Natural killer cell (primary cell): ENCODE measurements at regions of chr14 and their contacts with region 1.

Region 1: GRCh38 chr14:101823511-101824120 is 62.1 kb downstream of the PPP2R5C start:
- DNase-seq: peak; percentile 63 to 88
- ATAC-seq: peak; percentile 47 to 70 (median 57)
- H3K4me3 ChIP-seq: peak overlapping the region; percentile 48
- H3K4me3 Mint-ChIP-seq: peak overlapping the region; percentile 81
- H3K27ac ChIP-seq: peak overlapping the region; percentile 98
- H3K27ac Mint-ChIP-seq: peak overlapping the region; percentile 97 to 99
- H3K4me1 ChIP-seq: peaks cover 75% of the 10 kb centered on the region
- H3K4me1 Mint-ChIP-seq: peaks cover 86 to 88% of the 10 kb centered on the region in 2 donors
- H3K27me3 ChIP-seq: no peaks in the 10 kb centered on the region
- H3K27me3 Mint-ChIP-seq: no peaks in the 10 kb centered on the region
- CTCF ChIP-seq: no peak

Region 2: GRCh38 chr14:101713621-101714349 is 109.8 kb before region 1 on chr14:
- intact Hi-C with region 1: loop called (anchors 1 kb)
- DNase-seq: peak; percentile 52 to 85
- ATAC-seq: peak; percentile 68 to 82 (median 76)
- H3K4me3 ChIP-seq: no peak overlapping the region
- H3K4me3 Mint-ChIP-seq: peak overlapping the region; percentile 65
- H3K27ac ChIP-seq: peak overlapping the region; percentile 95
- H3K27ac Mint-ChIP-seq: peak overlapping the region; percentile 96 to 100
- H3K4me1 ChIP-seq: peaks cover 75% of the 10 kb centered on the region
- H3K4me1 Mint-ChIP-seq: peaks cover 59 to 73% of the 10 kb centered on the region in 2 donors
- H3K27me3 ChIP-seq: no peaks in the 10 kb centered on the region
- H3K27me3 Mint-ChIP-seq: no peaks in the 10 kb centered on the region
- CTCF ChIP-seq: no peak

Region 3: DNA sequence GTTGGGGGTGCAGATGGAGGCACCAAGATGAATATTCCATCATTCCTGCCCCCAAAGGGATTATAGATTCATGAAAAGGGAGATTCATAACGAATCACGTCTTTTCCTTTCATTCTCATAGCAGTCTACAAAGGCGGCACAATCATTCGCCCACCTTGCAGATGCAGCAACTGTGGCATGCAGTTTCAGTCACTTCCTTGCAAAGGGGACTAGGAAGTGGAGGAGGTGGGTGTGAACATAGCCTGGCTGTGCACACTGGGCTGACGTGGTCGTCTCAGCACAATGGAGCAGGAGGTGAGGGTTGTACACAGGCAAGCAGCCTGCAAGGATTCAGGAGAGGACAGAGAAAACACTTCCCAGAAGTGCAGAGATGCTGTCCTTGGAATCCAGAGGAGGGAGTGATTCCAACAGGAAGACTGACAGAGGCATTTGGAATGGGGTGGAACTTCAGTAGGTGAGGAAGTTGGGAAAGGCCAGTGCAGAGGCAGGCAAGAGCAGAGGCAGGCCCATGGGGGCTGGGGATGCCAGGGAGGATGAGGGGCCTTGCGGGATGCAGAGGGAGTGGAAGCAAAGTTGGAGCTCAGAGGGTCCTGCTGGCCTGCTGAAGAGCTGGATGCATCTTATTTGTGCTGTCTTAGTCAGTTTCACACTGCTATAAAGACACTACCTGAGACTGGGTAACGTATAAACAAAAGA is 84.0 kb before region 1 on chr14:
- intact Hi-C with region 1: no loop called
- DNase-seq: peak in 1 of 2 donors; percentile 12
- ATAC-seq: peak in 2 of 3 donors; percentile 46 to 53
- H3K4me3 ChIP-seq: no peak overlapping the region
- H3K4me3 Mint-ChIP-seq: peak overlapping the region; percentile 49
- H3K27ac ChIP-seq: no peak overlapping the region
- H3K27ac Mint-ChIP-seq: peak overlapping the region in 1 of 2 donors; percentile 70
- H3K4me1 ChIP-seq: peaks cover 20% of the 10 kb centered on the region
- H3K4me1 Mint-ChIP-seq: peaks cover 28 to 34% of the 10 kb centered on the region in 2 donors
- H3K27me3 ChIP-seq: no peaks in the 10 kb centered on the region
- H3K27me3 Mint-ChIP-seq: peaks cover 0 to 2% of the 10 kb centered on the region in 2 donors
- CTCF ChIP-seq: no peak

Region 4: GRCh38 chr14:101761032-101761880 is 62.4 kb before region 1 on chr14 and contains the start of gene PPP2R5C:
- intact Hi-C with region 1: loop called (anchors 2 kb)
- DNase-seq: peak; percentile 81 to 93
- ATAC-seq: peak; percentile 63 to 82 (median 71)
- H3K4me3 ChIP-seq: peak within 1 kb of the TSS; percentile 97
- H3K4me3 Mint-ChIP-seq: peak within 1 kb of the TSS; percentile 94
- H3K27ac ChIP-seq: peak within 1 kb of the TSS; percentile 96
- H3K27ac Mint-ChIP-seq: peak within 1 kb of the TSS; percentile 84 to 85
- H3K4me1 ChIP-seq: peaks cover 33% of the 10 kb centered on the region
- H3K4me1 Mint-ChIP-seq: peaks cover 57 to 65% of the 10 kb centered on the region in 2 donors
- H3K27me3 ChIP-seq: no peaks in the 10 kb centered on the region
- H3K27me3 Mint-ChIP-seq: peaks cover 0 to 3% of the 10 kb centered on the region in 2 donors
- CTCF ChIP-seq: no peak
- total RNA-seq, gene PPP2R5C: 716 to 779 (median 736) TPM

Region 5: DNA sequence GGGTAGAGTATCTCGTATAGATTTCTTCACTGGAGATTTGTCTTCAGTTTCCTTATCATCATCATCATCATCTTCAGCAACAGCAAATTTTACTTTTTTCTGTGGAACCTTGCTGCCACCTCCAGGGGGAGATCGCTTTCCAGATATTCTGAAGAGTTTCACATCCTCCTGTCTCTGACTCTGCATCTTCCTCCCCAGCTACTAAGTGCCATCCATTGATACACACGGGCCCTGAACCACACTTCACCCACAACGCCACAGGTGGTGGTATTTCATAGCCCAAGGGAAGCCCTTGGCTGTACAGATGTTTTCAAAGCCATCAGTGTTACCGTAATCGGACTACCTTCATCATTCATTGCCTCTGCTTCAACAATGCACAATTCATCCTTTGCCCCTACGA is 20.0 kb after region 1 on chr14:
- intact Hi-C with region 1: loop called (anchors 2 kb)
- DNase-seq: peak; percentile 40 to 86
- ATAC-seq: peak; percentile 70 to 78 (median 76)
- H3K4me3 ChIP-seq: no peak overlapping the region
- H3K4me3 Mint-ChIP-seq: peak overlapping the region; percentile 68
- H3K27ac ChIP-seq: peak overlapping the region; percentile 54
- H3K27ac Mint-ChIP-seq: peak overlapping the region; percentile 70 to 97
- H3K4me1 ChIP-seq: peaks cover 65% of the 10 kb centered on the region
- H3K4me1 Mint-ChIP-seq: peaks cover 84 to 85% of the 10 kb centered on the region in 2 donors
- H3K27me3 ChIP-seq: no peaks in the 10 kb centered on the region
- H3K27me3 Mint-ChIP-seq: no peaks in the 10 kb centered on the region
- CTCF ChIP-seq: peak; percentile 59

Region 6: GRCh38 chr14:102086972-102087761 is 263.6 kb after region 1 on chr14 and contains the start of gene HSP90AA1:
- intact Hi-C with region 1: loop called (anchors 10 kb)
- DNase-seq: peak; percentile 96 to 97
- ATAC-seq: peak; percentile 69 to 88 (median 78)
- H3K4me3 ChIP-seq: peak within 1 kb of the TSS; percentile 62
- H3K4me3 Mint-ChIP-seq: peak within 1 kb of the TSS; percentile 95
- H3K27ac ChIP-seq: peak within 1 kb of the TSS; percentile 99
- H3K27ac Mint-ChIP-seq: peak within 1 kb of the TSS; percentile 37 to 95
- H3K4me1 ChIP-seq: peaks cover 30% of the 10 kb centered on the region
- H3K4me1 Mint-ChIP-seq: peaks cover 56% of the 10 kb centered on the region in 2 donors
- H3K27me3 ChIP-seq: no peaks in the 10 kb centered on the region
- H3K27me3 Mint-ChIP-seq: no peaks in the 10 kb centered on the region
- CTCF ChIP-seq: no peak
- total RNA-seq, gene HSP90AA1: 470 to 665 (median 663) TPM